GM12878 (cell line): ENCODE measurements at regions of chr12 and their contacts with region 1.

Region 1: GRCh38 chr12:64877363-64878004 is 53.0 kb downstream of the TBC1D30 start:
- DNase-seq: peak; percentile 78
- ATAC-seq: peak; percentile 82
- H3K4me3 ChIP-seq: peak overlapping the region; percentile 48
- H3K27ac ChIP-seq: peak overlapping the region; percentile 87
- H3K4me1 ChIP-seq: peaks cover 65% of the 10 kb centered on the region
- H3K27me3 ChIP-seq: no peaks in the 10 kb centered on the region
- CTCF ChIP-seq: no peak
- EP300 ChIP-seq: peak; percentile 70 to 87
- POLR2A ChIP-seq: no peak
- RAD21 ChIP-seq: no peak

Region 2: GRCh38 chr12:64821183-64821582 is 56.3 kb before region 1 on chr12:
- CTCF ChIA-PET with region 1: interaction called, 9 read pairs
- POLR2A ChIA-PET with region 1: interaction called, 4 read pairs
- RAD21 ChIA-PET with region 1: interaction called, 7 read pairs
- SMC1A ChIA-PET with region 1: interaction called, 10 read pairs
- in situ Hi-C with region 1: no loop called
- intact Hi-C with region 1: loop called (anchors 2 kb)
- DNase-seq: no peak
- ATAC-seq: no peak
- H3K4me3 ChIP-seq: no peak overlapping the region
- H3K27ac ChIP-seq: no peak overlapping the region
- H3K4me1 ChIP-seq: no peaks in the 10 kb centered on the region
- H3K27me3 ChIP-seq: peaks cover 0 to 2% of the 10 kb centered on the region in 2 experiments; a peak in 2 of 4 replicates
- CTCF ChIP-seq: no peak
- EP300 ChIP-seq: no peak
- POLR2A ChIP-seq: no peak
- RAD21 ChIP-seq: no peak

Region 3: GRCh38 chr12:64840949-64841717 is 36.4 kb before region 1 on chr12:
- CTCF ChIA-PET with region 1: interaction called, 4 read pairs
- POLR2A ChIA-PET with region 1: no interaction called
- RAD21 ChIA-PET with region 1: interaction called, 10 read pairs
- SMC1A ChIA-PET with region 1: interaction called, 12 read pairs
- in situ Hi-C with region 1: no loop called
- intact Hi-C with region 1: no loop called
- DNase-seq: no peak
- ATAC-seq: no peak
- H3K4me3 ChIP-seq: no peak overlapping the region
- H3K27ac ChIP-seq: no peak overlapping the region
- H3K4me1 ChIP-seq: no peaks in the 10 kb centered on the region
- H3K27me3 ChIP-seq: no peaks in the 10 kb centered on the region
- CTCF ChIP-seq: no peak
- EP300 ChIP-seq: no peak
- POLR2A ChIP-seq: no peak
- RAD21 ChIP-seq: no peak

Region 4: DNA sequence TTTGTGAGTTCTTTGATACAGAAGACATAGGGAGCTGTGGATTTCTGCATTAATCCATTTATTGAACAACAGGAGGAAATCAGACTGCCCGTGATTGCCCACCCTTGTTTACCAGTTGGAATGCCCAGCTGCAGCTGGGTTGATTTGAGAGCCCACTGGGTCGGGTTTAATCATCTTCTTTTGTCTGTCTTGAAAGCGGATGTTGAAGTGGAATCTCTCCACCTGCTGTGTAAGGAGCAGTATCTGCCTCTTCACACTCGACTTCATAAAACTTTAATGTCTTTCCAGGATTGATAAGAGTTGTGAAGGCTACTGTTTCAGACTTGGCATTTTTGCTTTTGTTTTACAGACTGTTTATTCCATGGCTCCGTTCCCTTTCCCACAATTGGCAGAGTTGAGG is 13.2 kb before region 1 on chr12:
- CTCF ChIA-PET with region 1: interaction called, 8 read pairs
- POLR2A ChIA-PET with region 1: interaction called, 4 read pairs
- RAD21 ChIA-PET with region 1: interaction called, 20 read pairs
- SMC1A ChIA-PET with region 1: interaction called, 121 read pairs
- in situ Hi-C with region 1: no loop called
- intact Hi-C with region 1: no loop called
- DNase-seq: no peak
- ATAC-seq: 0 out of 3 replicates have a peak, but pooled peaks have one; percentile 23
- H3K4me3 ChIP-seq: no peak overlapping the region
- H3K27ac ChIP-seq: no peak overlapping the region
- H3K4me1 ChIP-seq: peaks cover 23% of the 10 kb centered on the region
- H3K27me3 ChIP-seq: no peaks in the 10 kb centered on the region
- CTCF ChIP-seq: no peak
- EP300 ChIP-seq: no peak
- POLR2A ChIP-seq: no peak
- RAD21 ChIP-seq: no peak

Region 5: GRCh38 chr12:65074932-65075331 is 197.4 kb after region 1 on chr12:
- CTCF ChIA-PET with region 1: no interaction called
- POLR2A ChIA-PET with region 1: no interaction called
- RAD21 ChIA-PET with region 1: no interaction called
- SMC1A ChIA-PET with region 1: no interaction called
- in situ Hi-C with region 1: no loop called
- intact Hi-C with region 1: no loop called
- DNase-seq: no peak
- ATAC-seq: peak; percentile 90
- H3K4me3 ChIP-seq: no peak overlapping the region
- H3K27ac ChIP-seq: no peak overlapping the region
- H3K4me1 ChIP-seq: no peaks in the 10 kb centered on the region
- H3K27me3 ChIP-seq: no peaks in the 10 kb centered on the region
- CTCF ChIP-seq: peak; percentile 15 to 29 (median 22); a peak in 3 of 6 replicates
- EP300 ChIP-seq: no peak
- POLR2A ChIP-seq: no peak
- RAD21 ChIP-seq: 0 out of 2 replicates have a peak, but pooled peaks have one; percentile 20